Caco-2 (cell line): ENCODE measurements at regions of chr6 and their contacts with region 1.

Region 1: DNA sequence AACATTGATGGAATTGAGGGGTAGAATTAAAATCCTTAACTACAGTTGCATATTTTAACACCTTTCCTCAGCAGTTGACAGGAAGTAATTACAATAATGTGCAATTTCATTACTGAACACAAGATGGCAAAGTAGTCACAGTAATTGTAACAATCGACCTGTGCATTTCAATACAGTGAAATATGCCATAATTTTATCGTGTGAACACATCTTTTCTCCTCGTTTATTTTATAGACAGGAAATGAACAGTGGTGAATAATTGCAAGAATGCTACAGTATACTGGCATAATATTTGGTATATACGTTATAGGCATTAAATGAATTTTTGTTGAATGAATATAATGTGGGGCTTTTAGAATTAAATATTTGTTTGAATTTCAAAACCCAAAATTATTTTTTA is 25.0 kb downstream of the CYB5R4 start:
- DNase-seq: peak in 1 of 2 experiments; percentile 24
- H3K4me3 ChIP-seq: no peak overlapping the region
- H3K4me3 Mint-ChIP-seq: no peak overlapping the region
- H3K27ac Mint-ChIP-seq: no peak overlapping the region
- H3K4me1 ChIP-seq: peaks cover 3% of the 10 kb centered on the region; the same call in 1 of the 2 replicates
- H3K4me1 Mint-ChIP-seq: peaks cover 4% of the 10 kb centered on the region
- H3K27me3 ChIP-seq: no peaks in the 10 kb centered on the region
- H3K27me3 Mint-ChIP-seq: no peaks in the 10 kb centered on the region
- CTCF ChIP-seq: peak; percentile 63 to 77

Region 2: DNA sequence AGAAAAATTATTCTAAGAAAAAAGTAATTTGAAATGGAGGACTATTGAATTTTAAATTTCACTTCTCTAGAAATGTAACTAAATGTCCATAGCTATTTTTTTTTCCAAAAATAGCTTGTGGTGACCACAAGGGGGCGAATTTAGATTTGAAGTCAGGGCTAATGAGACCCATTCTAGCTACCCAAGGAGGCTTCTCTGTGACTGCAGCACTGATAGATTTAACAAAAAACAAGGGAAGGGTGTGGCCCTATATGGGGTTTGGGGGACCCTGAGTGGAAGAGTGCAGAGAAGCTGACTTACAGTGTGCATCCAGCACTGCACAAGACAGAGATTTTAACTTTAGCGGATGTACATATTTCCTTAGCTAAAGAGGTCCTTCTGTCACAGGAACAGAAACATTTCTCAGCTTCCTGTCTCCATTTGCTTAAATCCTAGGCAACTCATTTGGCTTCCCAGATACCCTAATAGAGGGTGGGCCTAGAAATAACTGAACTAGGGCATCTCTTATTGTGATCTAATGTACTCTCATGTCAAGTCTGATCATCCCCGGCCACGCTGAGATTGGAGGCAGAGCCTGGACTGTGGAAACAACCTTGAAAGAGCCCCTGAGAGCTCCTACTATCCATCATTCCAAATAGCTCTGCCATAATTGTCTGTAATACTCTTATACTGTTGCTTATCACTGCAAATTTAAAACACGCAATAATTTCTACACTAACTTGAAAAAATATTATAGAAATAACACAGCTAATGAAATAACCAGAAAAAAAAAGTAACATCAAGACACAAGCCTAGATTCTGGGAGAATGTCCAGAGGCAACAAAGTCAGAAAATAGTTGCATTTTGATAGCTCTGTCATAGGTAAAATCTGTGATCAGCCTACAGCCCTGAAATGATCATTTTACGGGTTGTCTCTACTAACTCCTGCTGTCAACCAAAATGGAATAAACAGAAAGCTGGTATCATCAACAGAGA is 269.2 kb before region 1 on chr6:
- CTCF ChIA-PET with region 1: no interaction called
- POLR2A ChIA-PET with region 1: no interaction called
- intact Hi-C with region 1: loop called (anchors 1 kb)
- DNase-seq: peak in 1 of 2 experiments; percentile 37
- H3K4me3 ChIP-seq: no peak overlapping the region
- H3K4me3 Mint-ChIP-seq: no peak overlapping the region
- H3K27ac Mint-ChIP-seq: no peak overlapping the region
- H3K4me1 ChIP-seq: no peaks in the 10 kb centered on the region
- H3K4me1 Mint-ChIP-seq: no peaks in the 10 kb centered on the region
- H3K27me3 ChIP-seq: no peaks in the 10 kb centered on the region
- H3K27me3 Mint-ChIP-seq: peaks cover 9% of the 10 kb centered on the region
- CTCF ChIP-seq: peak; percentile 64 to 73

Region 3: DNA sequence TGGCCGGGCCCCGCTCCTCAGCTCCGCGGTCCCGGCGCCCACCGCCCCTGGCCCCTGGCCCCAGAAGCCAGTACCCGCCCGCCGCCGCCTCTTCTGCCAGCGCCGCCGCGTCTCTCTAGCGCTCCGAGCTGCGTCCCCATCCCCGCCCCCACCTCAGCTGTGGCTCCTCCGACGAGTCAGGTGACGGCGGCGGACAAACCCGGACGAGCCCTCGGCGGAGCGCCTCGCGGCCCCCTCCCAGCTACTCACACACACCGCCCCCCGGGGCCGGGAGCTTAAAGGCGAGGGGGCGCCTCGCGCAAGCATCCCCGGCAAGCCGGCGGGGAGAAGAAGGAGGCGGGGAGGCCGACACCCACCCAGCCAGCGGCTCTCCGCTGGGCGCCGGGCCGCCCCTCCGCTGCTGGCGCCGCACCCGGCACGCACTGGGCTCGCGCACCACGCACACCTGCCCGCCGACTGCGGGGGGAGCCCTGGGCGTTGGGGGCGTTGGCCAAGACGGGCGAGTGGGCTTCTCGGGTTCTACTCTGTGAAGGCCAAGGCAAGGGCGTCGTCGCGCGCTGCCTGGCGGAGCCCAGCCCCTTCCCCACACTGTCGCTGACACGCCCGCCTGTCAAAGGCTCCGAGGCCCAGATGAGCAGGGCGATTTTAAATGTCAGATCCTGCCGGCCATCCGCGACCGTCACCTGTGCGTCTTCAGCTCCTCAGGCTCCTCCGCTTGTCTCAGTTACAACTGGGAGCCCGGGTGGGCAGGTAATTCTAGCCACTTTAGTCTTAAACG is 175.4 kb before region 1 on chr6 and contains the start of gene SNAP91:
- CTCF ChIA-PET with region 1: no interaction called
- POLR2A ChIA-PET with region 1: no interaction called
- intact Hi-C with region 1: no loop called
- DNase-seq: no peak
- H3K4me3 ChIP-seq: no peak within 1 kb of the TSS
- H3K4me3 Mint-ChIP-seq: no peak within 1 kb of the TSS
- H3K27ac Mint-ChIP-seq: no peak within 1 kb of the TSS
- H3K4me1 ChIP-seq: no peaks in the 10 kb centered on the region
- H3K4me1 Mint-ChIP-seq: no peaks in the 10 kb centered on the region
- H3K27me3 ChIP-seq: no peaks in the 10 kb centered on the region
- H3K27me3 Mint-ChIP-seq: peaks cover 6% of the 10 kb centered on the region
- CTCF ChIP-seq: no peak
- total RNA-seq, gene SNAP91: not detected in 2 replicates

Region 4: GRCh38 chr6:84033523-84034451 is 149.3 kb after region 1 on chr6 and contains the start of gene MRAP2:
- CTCF ChIA-PET with region 1: no interaction called
- POLR2A ChIA-PET with region 1: no interaction called
- intact Hi-C with region 1: loop called (anchors 10 kb)
- DNase-seq: peak; percentile 42 to 68
- H3K4me3 ChIP-seq: peak within 1 kb of the TSS; percentile 66
- H3K4me3 Mint-ChIP-seq: peak within 1 kb of the TSS; percentile 72
- H3K27ac Mint-ChIP-seq: no peak within 1 kb of the TSS
- H3K4me1 ChIP-seq: 0 out of 2 replicates have a peak, but pooled peaks cover 3% of the 10 kb centered on the region
- H3K4me1 Mint-ChIP-seq: peaks cover 12% of the 10 kb centered on the region
- H3K27me3 ChIP-seq: peaks cover 2% of the 10 kb centered on the region; the same call in 1 of the 2 replicates
- H3K27me3 Mint-ChIP-seq: no peaks in the 10 kb centered on the region
- CTCF ChIP-seq: no peak
- total RNA-seq, gene MRAP2: 1.4 and 1.8 TPM in 2 replicates

Region 5: DNA sequence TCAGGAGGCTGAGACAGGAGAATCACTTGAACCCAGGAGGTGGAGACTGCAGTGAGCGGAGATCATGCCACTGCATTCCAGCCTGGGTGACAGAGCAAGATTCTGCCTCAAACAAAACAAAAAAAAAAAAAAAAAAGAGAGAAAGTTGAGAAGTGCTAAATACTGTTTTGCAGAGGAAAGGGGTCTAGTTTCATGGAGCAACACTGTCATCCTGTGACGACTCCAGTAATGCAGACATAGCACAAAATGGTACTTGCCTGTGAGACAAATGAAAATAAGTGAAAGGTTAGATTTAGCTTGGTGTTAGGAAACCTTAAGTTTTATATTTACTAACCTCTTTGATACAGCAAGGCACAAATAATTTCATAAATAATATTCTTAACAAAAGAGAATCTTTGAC is 313.2 kb after region 1 on chr6:
- CTCF ChIA-PET with region 1: no interaction called
- POLR2A ChIA-PET with region 1: no interaction called
- intact Hi-C with region 1: loop called (anchors 1 kb)
- DNase-seq: peak in 1 of 2 experiments; percentile 15
- H3K4me3 ChIP-seq: no peak overlapping the region
- H3K4me3 Mint-ChIP-seq: no peak overlapping the region
- H3K27ac Mint-ChIP-seq: no peak overlapping the region
- H3K4me1 ChIP-seq: no peaks in the 10 kb centered on the region
- H3K4me1 Mint-ChIP-seq: no peaks in the 10 kb centered on the region
- H3K27me3 ChIP-seq: no peaks in the 10 kb centered on the region
- H3K27me3 Mint-ChIP-seq: no peaks in the 10 kb centered on the region
- CTCF ChIP-seq: peak in 1 of 2 experiments; percentile 35

Region 6: DNA sequence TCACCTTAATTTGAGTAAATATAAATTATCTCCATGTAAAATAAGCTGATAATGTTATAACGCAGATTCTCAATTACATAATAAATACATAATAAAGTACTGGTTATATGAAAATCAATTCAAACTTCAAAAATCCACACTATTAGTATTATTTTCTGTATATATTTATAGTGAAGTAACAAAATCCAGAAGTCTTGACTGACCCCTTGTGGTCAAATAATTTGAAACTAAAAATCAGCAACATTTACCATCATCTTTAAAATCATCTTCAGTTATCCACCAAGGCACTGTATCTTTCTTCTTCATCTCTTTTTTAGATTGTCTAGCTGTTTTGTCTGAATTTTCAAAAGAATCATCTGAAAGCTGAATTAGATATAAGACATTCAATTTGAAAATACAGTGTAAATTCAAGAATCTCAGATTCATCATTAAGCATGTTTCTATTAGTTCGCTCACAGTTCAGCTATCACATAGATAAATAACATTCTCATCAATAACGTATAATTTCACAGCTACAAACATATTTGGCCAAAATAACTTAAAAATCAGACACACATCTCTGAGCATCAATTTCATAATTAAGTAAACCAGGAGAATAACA is 336.4 kb after region 1 on chr6:
- CTCF ChIA-PET with region 1: no interaction called
- POLR2A ChIA-PET with region 1: no interaction called
- intact Hi-C with region 1: loop called (anchors 1 kb)
- DNase-seq: no peak
- H3K4me3 ChIP-seq: no peak overlapping the region
- H3K4me3 Mint-ChIP-seq: no peak overlapping the region
- H3K27ac Mint-ChIP-seq: no peak overlapping the region
- H3K4me1 ChIP-seq: no peaks in the 10 kb centered on the region
- H3K4me1 Mint-ChIP-seq: no peaks in the 10 kb centered on the region
- H3K27me3 ChIP-seq: no peaks in the 10 kb centered on the region
- H3K27me3 Mint-ChIP-seq: no peaks in the 10 kb centered on the region
- CTCF ChIP-seq: peak; percentile 35 to 56

Region 7: DNA sequence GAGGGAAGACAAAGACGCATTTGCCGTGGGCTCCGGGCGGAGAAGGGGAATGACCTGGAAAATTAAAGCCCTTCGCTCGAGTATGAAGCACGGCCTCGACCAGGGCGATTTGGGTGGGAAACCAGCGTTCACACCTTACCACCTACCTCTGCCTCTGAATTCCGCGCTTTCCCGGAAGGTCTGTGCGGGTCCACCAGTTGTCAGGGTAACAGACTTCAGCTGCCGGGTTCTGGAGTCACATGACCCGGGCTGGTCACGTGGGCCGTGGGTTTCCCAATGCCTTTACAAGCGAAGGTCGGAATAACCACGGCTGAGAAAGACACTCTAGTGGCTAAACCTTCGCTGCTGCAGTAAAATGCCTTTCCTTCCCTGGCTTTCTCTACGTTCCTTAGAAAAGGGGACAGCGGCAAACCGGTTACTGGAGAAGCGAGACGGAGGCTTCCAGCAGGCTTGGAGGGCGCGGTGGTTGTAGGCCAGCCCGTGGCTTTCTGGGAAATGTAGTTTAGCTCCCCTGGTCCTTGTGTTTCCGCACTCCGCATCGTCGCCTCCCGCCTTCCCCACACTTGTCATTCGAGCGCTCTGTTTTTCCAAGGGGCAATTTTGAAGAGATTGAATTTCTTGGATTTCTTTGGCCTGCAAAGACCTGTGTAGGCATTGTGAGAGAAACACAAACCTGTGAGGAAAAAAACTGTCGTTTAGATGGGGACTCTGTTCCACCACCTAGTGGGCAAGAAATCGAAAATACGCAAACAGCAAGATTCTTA is 343.1 kb after region 1 on chr6 and contains the start of gene CEP162:
- CTCF ChIA-PET with region 1: no interaction called
- POLR2A ChIA-PET with region 1: no interaction called
- intact Hi-C with region 1: loop called (anchors 2 kb)
- DNase-seq: peak; percentile 85 to 88
- H3K4me3 ChIP-seq: peak within 1 kb of the TSS; percentile 50
- H3K4me3 Mint-ChIP-seq: peak within 1 kb of the TSS; percentile 86
- H3K27ac Mint-ChIP-seq: peak within 1 kb of the TSS; percentile 64
- H3K4me1 ChIP-seq: 0 out of 2 replicates have a peak, but pooled peaks cover 4% of the 10 kb centered on the region
- H3K4me1 Mint-ChIP-seq: peaks cover 6% of the 10 kb centered on the region
- H3K27me3 ChIP-seq: no peaks in the 10 kb centered on the region
- H3K27me3 Mint-ChIP-seq: no peaks in the 10 kb centered on the region
- CTCF ChIP-seq: peak; percentile 57 to 62
- total RNA-seq, gene CEP162: 6.8 and 7.3 TPM in 2 replicates